ENCODE measurements at regions of chr16 and their contacts with region 1.

Region 1: GRCh38 chr16:14529010-14529669 is 100.9 kb downstream of the PARN start:
- DNase-seq: peak; percentile 73 to 97
- ATAC-seq: peak; percentile 79 to 92
- H3K4me3 ChIP-seq: no peak overlapping the region
- H3K27ac ChIP-seq: peak overlapping the region; percentile 91
- H3K4me1 ChIP-seq: peaks cover 70% of the 10 kb centered on the region
- CTCF ChIP-seq: peak; percentile 94
- EP300 ChIP-seq: peak; percentile 35 to 44; a peak in 2 of 5 replicates
- POLR2A ChIP-seq: peak; percentile 23; the same call in 1 of the 2 replicates
- RAD21 ChIP-seq: peak; percentile 99 to 100

Region 2: DNA sequence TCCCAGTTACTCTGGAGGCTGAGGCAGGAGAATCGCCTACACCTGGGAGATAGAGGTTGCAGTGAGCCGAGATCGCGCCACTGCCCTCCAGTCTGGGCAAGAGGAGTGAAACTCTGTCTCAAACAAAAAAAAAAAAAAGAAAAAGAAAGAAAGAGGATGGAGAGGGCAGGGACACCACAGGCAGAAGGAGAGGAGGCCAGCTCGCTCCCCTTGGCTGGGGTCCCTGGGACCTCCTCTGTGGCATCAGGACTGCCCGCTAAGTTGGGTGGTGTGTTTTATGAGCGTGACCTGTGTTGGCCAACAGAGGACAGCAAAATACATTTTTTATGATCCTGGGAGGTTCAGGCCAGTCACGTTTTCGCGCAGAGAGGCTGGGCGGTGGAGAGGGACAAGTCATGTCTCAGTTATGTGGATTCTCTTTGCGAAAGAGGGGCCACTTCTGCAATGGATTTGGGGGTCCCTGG is 228.4 kb before region 1 on chr16:
- CTCF ChIA-PET with region 1: interaction called, 49 read pairs
- POLR2A ChIA-PET with region 1: interaction called, 10 read pairs
- DNase-seq: peak; percentile 78 to 91
- ATAC-seq: peak; percentile 64 to 78
- H3K4me3 ChIP-seq: peak overlapping the region; percentile 98
- H3K27ac ChIP-seq: peak overlapping the region; percentile 99 to 100
- H3K4me1 ChIP-seq: peaks cover 10% of the 10 kb centered on the region
- CTCF ChIP-seq: peak; percentile 75
- EP300 ChIP-seq: no peak
- POLR2A ChIP-seq: no peak
- RAD21 ChIP-seq: peak; percentile 91 to 95

Region 3: GRCh38 chr16:14364386-14365204 is 164.5 kb before region 1 on chr16:
- CTCF ChIA-PET with region 1: interaction called, 13 read pairs
- POLR2A ChIA-PET with region 1: interaction called, 3 read pairs
- DNase-seq: peak; percentile 92 to 99
- ATAC-seq: peak; percentile 84 to 86
- H3K4me3 ChIP-seq: peak overlapping the region; percentile 13; the same call in 2 of the 3 replicates
- H3K27ac ChIP-seq: peak overlapping the region; percentile 98 to 99
- H3K4me1 ChIP-seq: peaks cover 38% of the 10 kb centered on the region
- CTCF ChIP-seq: peak; percentile 39; the same call in 2 of the 3 replicates
- EP300 ChIP-seq: peak; percentile 100
- POLR2A ChIP-seq: 0 out of 2 replicates have a peak, but pooled peaks have one; percentile 19
- RAD21 ChIP-seq: peak; percentile 42 to 73

Region 4: DNA sequence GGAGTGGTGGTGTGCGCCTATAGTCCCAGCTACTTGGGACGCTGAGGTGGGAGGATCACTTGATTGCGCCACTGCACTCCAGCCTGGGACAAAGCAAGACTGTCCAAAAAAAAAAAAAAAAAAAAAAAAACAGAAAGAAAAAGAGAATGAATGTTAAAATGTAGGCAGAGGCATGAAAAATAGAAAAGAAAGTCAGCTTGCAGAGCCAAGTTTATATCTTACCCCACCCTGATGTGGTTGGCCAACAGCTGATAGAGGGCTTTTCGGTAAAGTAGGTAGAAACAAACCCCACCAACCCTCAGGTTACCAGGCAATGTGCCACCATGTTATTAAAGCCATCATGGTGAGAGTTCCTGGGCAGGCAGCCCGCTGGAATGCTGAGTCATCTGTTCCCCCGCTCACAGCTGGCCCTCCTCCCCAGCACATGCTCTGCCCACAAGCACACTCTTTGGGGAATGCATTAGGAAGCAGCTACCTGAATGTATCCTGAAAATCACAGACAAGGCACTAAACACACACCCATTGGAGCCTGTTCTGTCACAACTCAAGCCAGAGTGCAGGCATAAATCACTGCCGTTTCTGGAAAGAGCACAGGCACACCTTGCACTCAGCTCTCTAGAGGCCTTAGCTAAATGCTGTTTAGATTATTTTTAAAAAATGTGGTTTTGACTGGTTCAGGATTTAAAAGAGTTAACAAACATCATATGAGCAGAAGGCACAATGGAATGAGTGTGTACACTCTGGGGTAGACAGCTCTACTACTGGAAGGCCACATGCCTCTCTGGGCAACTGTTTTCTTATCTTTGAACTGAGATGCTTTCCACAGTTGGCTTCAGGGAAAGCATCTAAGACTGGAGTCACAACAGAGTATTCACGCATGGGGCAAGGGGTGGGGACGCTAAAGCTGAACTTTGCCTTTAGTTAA is 27.5 kb before region 1 on chr16:
- CTCF ChIA-PET with region 1: interaction called, 25 read pairs
- POLR2A ChIA-PET with region 1: interaction called, 7 read pairs
- DNase-seq: peak; percentile 78 to 95
- ATAC-seq: peak; percentile 84 to 87
- H3K4me3 ChIP-seq: no peak overlapping the region
- H3K27ac ChIP-seq: peak overlapping the region; percentile 94 to 95
- H3K4me1 ChIP-seq: peaks cover 99% of the 10 kb centered on the region
- CTCF ChIP-seq: no peak
- EP300 ChIP-seq: peak; percentile 14 to 47; a peak in 1 of 5 replicates
- POLR2A ChIP-seq: no peak
- RAD21 ChIP-seq: no peak

Region 5: GRCh38 chr16:14629919-14630619 is 100.9 kb after region 1 on chr16 and contains the start of gene PARN:
- CTCF ChIA-PET with region 1: no interaction called
- POLR2A ChIA-PET with region 1: no interaction called
- DNase-seq: peak; percentile 97 to 99
- ATAC-seq: peak; percentile 70 to 72
- H3K4me3 ChIP-seq: peak within 1 kb of the TSS; percentile 79
- H3K27ac ChIP-seq: peak within 1 kb of the TSS; percentile 90 to 97
- H3K4me1 ChIP-seq: peaks cover 35% of the 10 kb centered on the region
- CTCF ChIP-seq: no peak
- EP300 ChIP-seq: no peak
- POLR2A ChIP-seq: peak; percentile 80
- RAD21 ChIP-seq: no peak
- polyA plus RNA-seq, gene PARN: 58.6 and 86.7 TPM in 2 replicates

Region 6: DNA sequence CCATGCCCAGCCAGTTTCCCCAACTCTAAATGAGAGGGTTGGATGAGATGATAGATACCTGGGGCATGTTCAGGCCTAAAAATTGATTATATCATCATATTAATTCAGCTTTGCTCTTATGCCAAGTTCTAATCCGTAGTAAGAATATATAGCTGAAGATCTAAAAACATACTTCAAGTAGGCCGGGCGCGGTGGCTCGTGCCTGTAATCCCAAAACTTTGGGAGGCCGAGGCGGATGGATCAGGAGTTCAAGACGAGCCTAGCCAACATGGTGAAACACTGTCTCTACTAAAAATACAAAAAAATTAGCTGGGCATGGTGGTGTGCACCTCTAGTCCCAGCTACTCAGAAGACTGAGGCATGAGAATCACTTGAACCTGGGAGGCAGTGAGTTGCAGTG is 153.0 kb after region 1 on chr16:
- CTCF ChIA-PET with region 1: no interaction called
- POLR2A ChIA-PET with region 1: no interaction called
- DNase-seq: no peak
- ATAC-seq: no peak
- H3K4me3 ChIP-seq: no peak overlapping the region
- H3K27ac ChIP-seq: no peak overlapping the region
- H3K4me1 ChIP-seq: no peaks in the 10 kb centered on the region
- CTCF ChIP-seq: no peak
- EP300 ChIP-seq: no peak
- POLR2A ChIP-seq: no peak
- RAD21 ChIP-seq: no peak

Measured in A549 (cell line).